ENCODE measurements at regions of chr3 and their contacts with region 1.

Region 1: GRCh38 chr3:186259612-186260383 is 102.2 kb downstream of the DGKG start:
- DNase-seq: peak; percentile 44 to 82 (median 54)
- ATAC-seq: peak; percentile 77 to 93 (median 92)
- H3K4me3 ChIP-seq: no peak overlapping the region
- H3K27ac ChIP-seq: no peak overlapping the region
- H3K4me1 ChIP-seq: peaks cover 0 to 8% (median 0%) of the 10 kb centered on the region in 12 donors
- H3K27me3 ChIP-seq: no peaks in the 10 kb centered on the region
- CTCF ChIP-seq: peak; percentile 66 to 87 (median 80)
- POLR2A ChIP-seq: no peak

Region 2: GRCh38 chr3:186464424-186465093 is 204.8 kb after region 1 on chr3:
- intact Hi-C with region 1: no loop called
- DNase-seq: no peak
- ATAC-seq: no peak
- H3K4me3 ChIP-seq: no peak overlapping the region
- H3K27ac ChIP-seq: no peak overlapping the region
- H3K4me1 ChIP-seq: peaks cover 0 to 9% (median 0%) of the 10 kb centered on the region in 12 donors
- H3K27me3 ChIP-seq: no peaks in the 10 kb centered on the region
- CTCF ChIP-seq: peak in 1 of 12 donors; percentile 13
- POLR2A ChIP-seq: no peak

Region 3: DNA sequence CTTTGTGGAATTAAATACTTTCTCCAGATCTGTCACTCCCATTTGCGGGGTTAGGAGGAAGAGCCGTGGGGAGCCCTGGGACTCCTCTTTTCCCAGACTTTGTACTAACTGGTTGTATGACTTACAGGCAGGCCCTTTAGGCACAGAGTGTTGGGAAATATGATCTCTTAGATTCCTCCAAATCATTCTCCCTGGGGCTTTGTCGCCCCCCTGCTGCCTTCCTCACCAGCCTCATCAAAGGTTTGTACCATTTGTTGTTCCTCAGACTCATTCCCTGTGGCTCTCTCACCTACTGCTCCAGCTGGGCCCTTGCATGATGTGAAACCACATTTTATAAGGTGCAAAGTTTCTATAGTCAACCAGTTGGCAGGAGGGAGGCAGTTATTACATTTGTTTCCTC is 228.0 kb after region 1 on chr3:
- intact Hi-C with region 1: loop called in 2 of 10 experiments (anchors 5 kb)
- DNase-seq: no peak
- ATAC-seq: peak; percentile 53 to 75 (median 72)
- H3K4me3 ChIP-seq: no peak overlapping the region
- H3K27ac ChIP-seq: no peak overlapping the region
- H3K4me1 ChIP-seq: peaks cover 0 to 4% (median 0%) of the 10 kb centered on the region in 12 donors
- H3K27me3 ChIP-seq: no peaks in the 10 kb centered on the region
- CTCF ChIP-seq: peak in 7 of 12 donors; percentile 12 to 43 (median 32)
- POLR2A ChIP-seq: no peak

Region 4: DNA sequence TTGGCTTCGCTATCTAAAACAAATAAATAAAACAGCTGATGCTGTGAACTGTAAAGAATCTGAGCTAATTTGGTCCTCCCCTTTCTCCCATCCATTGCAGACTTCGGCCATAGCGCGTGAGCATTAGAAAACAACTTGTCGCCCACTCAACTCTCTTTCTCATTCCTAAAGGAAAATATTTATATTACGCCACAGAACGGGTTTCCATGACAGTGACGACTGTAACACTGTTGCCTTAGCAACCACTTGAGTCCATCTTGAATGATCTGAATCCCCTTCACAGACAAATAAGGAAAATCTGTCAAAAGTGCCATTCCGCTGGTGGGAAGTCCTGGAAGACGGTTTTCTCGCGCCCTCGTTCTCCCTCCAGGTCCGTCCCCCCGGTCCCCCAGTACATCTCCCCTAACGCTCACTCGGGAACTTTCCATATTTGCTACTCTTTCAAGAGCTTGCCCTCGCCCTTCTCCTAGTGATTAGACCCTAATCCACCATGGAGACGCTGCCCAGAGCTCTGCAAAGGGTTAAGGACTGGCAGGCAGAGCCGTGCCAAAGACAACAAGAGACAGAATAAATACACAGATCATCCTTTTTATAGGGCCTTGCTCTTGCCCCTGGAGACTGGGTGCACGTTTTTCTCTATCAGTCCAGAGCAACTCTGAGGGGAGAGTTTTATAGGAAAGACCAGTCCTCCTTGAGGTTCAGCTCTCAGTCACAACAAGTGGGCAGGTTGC is 233.9 kb after region 1 on chr3:
- intact Hi-C with region 1: loop called in 2 of 10 experiments (anchors 5 kb)
- DNase-seq: no peak
- ATAC-seq: peak in 1 of 4 donors; percentile 31
- H3K4me3 ChIP-seq: no peak overlapping the region
- H3K27ac ChIP-seq: peak overlapping the region in 5 of 12 donors; percentile 5 to 75 (median 45)
- H3K4me1 ChIP-seq: peaks cover 0 to 8% (median 0%) of the 10 kb centered on the region in 12 donors
- H3K27me3 ChIP-seq: no peaks in the 10 kb centered on the region
- CTCF ChIP-seq: no peak
- POLR2A ChIP-seq: no peak

Region 5: DNA sequence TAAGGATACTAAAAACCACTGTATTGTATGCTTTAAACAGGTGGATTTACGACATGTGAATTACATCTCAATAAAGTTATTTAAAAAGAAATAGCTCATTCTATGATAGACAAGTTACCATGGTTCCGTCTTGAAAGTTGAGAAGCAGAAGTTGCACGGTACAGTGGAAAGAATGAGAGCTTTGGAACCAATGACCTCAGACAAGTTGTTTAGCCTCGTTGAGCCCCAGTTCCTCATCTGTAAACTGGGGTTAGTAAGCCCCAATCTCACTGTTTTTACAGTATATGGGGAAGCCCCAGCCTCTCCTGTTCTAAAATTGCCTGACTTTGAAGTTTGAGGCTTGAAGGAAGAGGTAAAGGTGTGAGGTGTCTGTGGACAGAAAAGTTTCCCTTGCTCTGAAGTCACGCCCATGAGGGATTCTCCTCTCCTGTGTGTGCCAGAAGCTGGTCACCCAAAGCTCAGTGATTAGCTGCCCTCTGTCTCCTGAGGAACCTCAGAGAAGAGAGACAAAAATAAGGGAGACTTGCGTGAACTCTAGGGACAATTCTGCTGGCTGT is 274.4 kb after region 1 on chr3:
- intact Hi-C with region 1: loop called in 1 of 10 experiments (anchors 2 kb)
- DNase-seq: no peak
- ATAC-seq: peak in 2 of 4 donors; percentile 16 to 60
- H3K4me3 ChIP-seq: no peak overlapping the region
- H3K27ac ChIP-seq: no peak overlapping the region
- H3K4me1 ChIP-seq: peaks cover 0 to 30% (median 7%) of the 10 kb centered on the region in 12 donors
- H3K27me3 ChIP-seq: no peaks in the 10 kb centered on the region
- CTCF ChIP-seq: no peak
- POLR2A ChIP-seq: no peak

Region 6: GRCh38 chr3:186540221-186540834 is 280.5 kb after region 1 on chr3:
- intact Hi-C with region 1: loop called in 9 of 10 experiments (anchors 1 to 5 kb)
- DNase-seq: peak in 4 of 5 donors; percentile 36 to 64 (median 54)
- ATAC-seq: peak; percentile 53 to 82 (median 80)
- H3K4me3 ChIP-seq: peak overlapping the region in 5 of 12 donors; percentile 11 to 42 (median 26)
- H3K27ac ChIP-seq: no peak overlapping the region
- H3K4me1 ChIP-seq: peaks cover 0 to 23% (median 14%) of the 10 kb centered on the region in 12 donors
- H3K27me3 ChIP-seq: no peaks in the 10 kb centered on the region
- CTCF ChIP-seq: peak; percentile 59 to 79 (median 70)
- POLR2A ChIP-seq: no peak